Common myeloid progenitor, CD34-positive (primary cell): ENCODE measurements at regions of chr20 and their contacts with region 1.

Region 1: GRCh38 chr20:36666181-36666740 is 20.3 kb upstream of the SLA2 start:
- DNase-seq: peak; percentile 32 to 60 (median 54)
- H3K4me3 ChIP-seq: no peak overlapping the region
- H3K27ac ChIP-seq: no peak overlapping the region
- H3K4me1 ChIP-seq: peaks cover 0 to 10% (median 4%) of the 10 kb centered on the region in 4 experiments
- H3K27me3 ChIP-seq: no peaks in the 10 kb centered on the region

Region 2: DNA sequence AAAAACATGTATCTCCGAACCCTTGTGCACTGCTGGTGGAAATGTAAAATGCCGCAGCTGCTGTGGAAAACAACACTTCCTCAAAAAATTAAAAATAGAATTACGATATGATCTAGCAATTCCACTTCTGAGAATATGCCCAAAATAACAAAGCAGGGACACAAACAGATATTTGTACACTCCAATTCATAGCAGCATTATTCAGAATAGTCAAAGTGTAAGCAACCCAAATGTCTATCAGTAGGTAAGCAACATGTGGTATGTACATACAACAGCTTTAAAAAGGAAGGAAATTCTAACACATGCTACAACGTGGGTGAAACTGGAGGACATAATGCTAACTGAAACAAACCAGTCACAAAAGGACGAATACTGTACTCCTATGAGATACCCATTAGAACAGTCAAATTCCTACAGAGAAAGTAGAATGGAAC is 66.3 kb before region 1 on chr20:
- CTCF ChIA-PET with region 1: no interaction called
- POLR2A ChIA-PET with region 1: no interaction called
- DNase-seq: peak; percentile 30 to 77 (median 67)
- H3K4me3 ChIP-seq: peak overlapping the region in 5 of 7 experiments; percentile 5 to 34 (median 13)
- H3K27ac ChIP-seq: peak overlapping the region in 1 of 2 experiments; percentile 31
- H3K4me1 ChIP-seq: peaks cover 8 to 43% (median 24%) of the 10 kb centered on the region in 4 experiments
- H3K27me3 ChIP-seq: no peaks in the 10 kb centered on the region

Region 3: DNA sequence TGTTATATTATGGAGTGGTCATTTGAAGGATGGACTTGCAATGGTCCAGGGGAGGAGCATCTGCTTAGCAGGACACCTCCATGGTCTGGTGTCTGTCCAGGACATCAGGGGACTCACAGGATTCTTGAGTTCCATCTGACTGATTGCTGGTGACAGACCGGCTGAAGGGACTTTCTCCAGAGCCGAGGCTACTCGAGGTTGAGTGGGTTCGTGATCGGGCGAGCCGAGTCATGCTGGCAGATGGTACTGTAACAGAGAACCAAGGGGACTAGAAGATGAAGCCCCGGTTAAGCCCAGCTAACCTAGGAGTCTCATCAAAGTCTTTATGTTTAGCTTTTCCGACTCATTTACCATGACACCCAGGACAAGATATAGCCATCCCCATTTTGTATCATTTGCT is 12.8 kb before region 1 on chr20:
- CTCF ChIA-PET with region 1: interaction called, 14 read pairs
- POLR2A ChIA-PET with region 1: no interaction called
- DNase-seq: no peak
- H3K4me3 ChIP-seq: no peak overlapping the region
- H3K27ac ChIP-seq: no peak overlapping the region
- H3K4me1 ChIP-seq: peaks cover 0 to 6% (median 2%) of the 10 kb centered on the region in 4 experiments
- H3K27me3 ChIP-seq: no peaks in the 10 kb centered on the region

Region 4: GRCh38 chr20:36682311-36682710 is 16.1 kb after region 1 on chr20:
- CTCF ChIA-PET with region 1: interaction called, 14 read pairs
- POLR2A ChIA-PET with region 1: no interaction called
- DNase-seq: no peak
- H3K4me3 ChIP-seq: no peak overlapping the region
- H3K27ac ChIP-seq: no peak overlapping the region
- H3K4me1 ChIP-seq: no peaks in the 10 kb centered on the region
- H3K27me3 ChIP-seq: no peaks in the 10 kb centered on the region

Region 5: GRCh38 chr20:36700438-36700837 is 34.2 kb after region 1 on chr20:
- CTCF ChIA-PET with region 1: no interaction called
- POLR2A ChIA-PET with region 1: no interaction called
- DNase-seq: no peak
- H3K4me3 ChIP-seq: no peak overlapping the region
- H3K27ac ChIP-seq: no peak overlapping the region
- H3K4me1 ChIP-seq: no peaks in the 10 kb centered on the region
- H3K27me3 ChIP-seq: no peaks in the 10 kb centered on the region